Common myeloid progenitor, CD34-positive (primary cell): ENCODE measurements at regions of chr19 and their contacts with region 1.

Region 1: DNA sequence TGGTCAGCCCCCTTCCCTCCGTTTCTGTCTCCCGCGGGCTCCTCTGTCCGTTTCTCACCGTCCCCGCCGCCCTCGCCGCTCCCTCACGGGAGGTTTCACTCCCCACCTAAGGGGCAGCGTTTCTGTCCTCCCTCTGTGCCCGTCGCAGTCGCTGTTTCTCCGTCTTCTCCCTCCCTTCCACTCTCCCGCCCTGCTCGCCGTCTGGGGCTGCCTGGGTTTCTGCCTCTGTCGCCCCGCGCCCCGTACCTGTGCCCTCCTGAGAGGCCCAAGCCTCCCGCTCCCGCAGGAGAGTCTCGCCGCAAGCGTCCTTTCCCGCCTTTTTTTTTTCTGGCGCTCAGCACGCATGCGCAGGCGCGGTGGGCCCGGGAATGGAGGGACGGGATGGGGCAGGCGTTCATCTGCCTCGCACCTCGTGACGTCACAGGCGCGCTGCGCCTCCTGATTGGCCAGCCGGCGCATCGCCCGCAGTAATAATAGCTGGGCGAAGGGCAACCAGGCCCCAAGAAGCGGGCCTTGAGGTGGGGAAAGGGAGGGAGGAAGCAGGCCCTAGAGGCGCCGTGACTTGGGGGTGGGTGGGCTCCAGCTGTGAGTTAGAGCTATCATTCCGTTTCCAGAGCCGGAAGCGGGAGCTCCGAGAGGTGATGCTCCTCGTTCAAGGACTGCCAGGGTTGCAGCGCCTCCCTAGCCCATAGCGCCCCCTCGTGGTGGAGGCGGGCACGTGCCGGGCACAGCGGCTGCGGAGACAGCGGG is 15.4 kb downstream of the SSC5D start:
- DNase-seq: peak; percentile 92 to 94 (median 93)
- H3K4me3 ChIP-seq: peak overlapping the region in 6 of 7 experiments; percentile 37 to 76 (median 56)
- H3K27ac ChIP-seq: peak overlapping the region in 1 of 2 experiments; percentile 14
- H3K4me1 ChIP-seq: peaks cover 0 to 10% (median 7%) of the 10 kb centered on the region in 4 experiments
- H3K27me3 ChIP-seq: peaks cover 0 to 2% (median 0%) of the 10 kb centered on the region in 5 experiments

Region 2: GRCh38 chr19:55319785-55320184 is 183.9 kb before region 1 on chr19:
- CTCF ChIA-PET with region 1: no interaction called
- POLR2A ChIA-PET with region 1: no interaction called
- DNase-seq: no peak
- H3K4me3 ChIP-seq: peak overlapping the region in 2 of 7 experiments; percentile 24 to 64
- H3K27ac ChIP-seq: no peak overlapping the region
- H3K4me1 ChIP-seq: peaks cover 0 to 38% (median 32%) of the 10 kb centered on the region in 4 experiments
- H3K27me3 ChIP-seq: no peaks in the 10 kb centered on the region

Region 3: GRCh38 chr19:55407800-55408532 is 95.7 kb before region 1 on chr19:
- CTCF ChIA-PET with region 1: no interaction called
- POLR2A ChIA-PET with region 1: no interaction called
- DNase-seq: peak; percentile 100
- H3K4me3 ChIP-seq: peak overlapping the region in 6 of 7 experiments; percentile 68 to 87 (median 80)
- H3K27ac ChIP-seq: peak overlapping the region; percentile 88 to 94
- H3K4me1 ChIP-seq: peaks cover 5 to 24% (median 22%) of the 10 kb centered on the region in 4 experiments
- H3K27me3 ChIP-seq: no peaks in the 10 kb centered on the region

Region 4: DNA sequence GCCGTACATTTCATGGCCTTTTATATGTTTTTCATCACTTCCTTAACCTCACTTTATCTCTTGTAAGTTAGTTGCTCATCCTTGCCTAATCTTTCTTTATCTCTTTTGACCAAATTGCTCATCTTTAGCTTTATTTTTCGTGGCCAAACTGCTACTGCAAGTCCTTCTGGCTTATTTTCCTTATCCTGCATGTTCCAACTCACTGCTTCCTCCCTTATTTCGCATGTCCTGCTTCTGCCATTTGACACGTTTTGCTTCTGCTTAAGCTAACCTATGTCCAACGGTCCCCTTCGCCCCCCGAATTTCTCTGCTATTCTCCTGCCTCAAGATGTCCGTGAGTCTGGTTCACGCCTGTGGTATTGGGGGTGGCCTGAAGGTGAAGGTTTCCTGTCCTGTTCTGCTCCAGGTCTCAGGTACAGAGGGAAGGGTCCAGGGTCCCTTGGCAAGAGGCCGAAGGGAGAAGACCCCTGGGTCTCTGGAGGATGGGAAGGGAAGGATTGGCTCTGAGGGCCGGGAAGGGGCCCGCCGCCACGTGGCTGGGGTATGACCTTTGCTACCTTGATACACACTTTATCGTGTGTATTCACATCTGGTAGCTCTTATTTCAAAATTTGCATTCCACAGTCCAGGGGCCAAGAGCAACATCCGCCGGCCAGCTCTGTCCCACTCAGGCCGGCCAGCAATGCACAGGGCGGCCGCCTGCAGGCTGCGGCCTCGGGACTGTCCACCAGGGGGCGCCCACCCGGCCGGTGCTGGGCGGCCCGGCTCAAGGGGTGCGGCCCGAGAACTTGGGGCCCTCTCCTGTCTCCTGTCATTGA is 36.2 kb before region 1 on chr19:
- CTCF ChIA-PET with region 1: interaction called, 37 read pairs
- POLR2A ChIA-PET with region 1: no interaction called
- DNase-seq: peak in 2 of 3 donors; percentile 49
- H3K4me3 ChIP-seq: no peak overlapping the region
- H3K27ac ChIP-seq: peak overlapping the region in 1 of 2 experiments; percentile 38
- H3K4me1 ChIP-seq: peaks cover 0 to 2% (median 1%) of the 10 kb centered on the region in 4 experiments
- H3K27me3 ChIP-seq: no peaks in the 10 kb centered on the region

Region 5: DNA sequence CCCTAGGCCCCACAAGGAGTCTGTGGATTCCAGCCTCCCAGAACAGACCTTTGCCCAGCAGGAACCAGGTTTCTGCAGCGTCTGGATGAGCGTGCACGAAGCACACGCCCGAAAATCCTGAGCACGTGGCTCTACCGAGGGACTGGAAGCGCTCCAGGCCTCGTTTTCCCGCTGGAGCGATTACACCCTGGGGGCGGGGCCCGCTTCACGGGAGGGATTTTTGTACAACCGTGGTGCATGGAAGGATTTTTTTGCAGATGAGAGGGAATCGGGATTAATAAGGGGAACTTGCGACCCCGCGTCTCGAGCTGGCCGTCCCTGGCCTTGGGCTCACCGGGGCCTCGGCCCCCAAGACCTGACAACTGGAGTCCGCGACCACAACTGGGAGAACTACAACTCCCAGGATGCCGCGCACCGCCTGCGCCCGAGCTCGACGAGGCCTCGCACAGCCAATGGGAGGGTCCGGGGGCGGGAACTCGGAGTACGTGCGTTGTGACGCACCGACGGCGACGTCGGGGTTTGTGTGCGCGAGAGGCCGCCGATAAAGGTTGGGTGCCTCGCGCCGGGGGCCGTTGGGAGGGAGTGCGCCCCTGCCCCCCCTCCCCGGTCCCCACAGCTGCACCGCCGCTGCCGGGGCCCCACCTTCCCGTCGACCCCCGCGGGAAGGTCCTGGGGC is 27.4 kb before region 1 on chr19 and contains the start of gene ZNF628:
- CTCF ChIA-PET with region 1: interaction called, 11 read pairs
- POLR2A ChIA-PET with region 1: interaction called, 3 read pairs
- DNase-seq: peak; percentile 98 to 99 (median 99)
- H3K4me3 ChIP-seq: peak within 1 kb of the TSS; percentile 50 to 89 (median 81)
- H3K27ac ChIP-seq: peak within 1 kb of the TSS in 1 of 2 experiments; percentile 84
- H3K4me1 ChIP-seq: peaks cover 2 to 19% (median 11%) of the 10 kb centered on the region in 4 experiments
- H3K27me3 ChIP-seq: no peaks in the 10 kb centered on the region

Region 6: GRCh38 chr19:55516878-55517620 is 13.4 kb after region 1 on chr19:
- CTCF ChIA-PET with region 1: interaction called, 21 read pairs
- POLR2A ChIA-PET with region 1: no interaction called
- DNase-seq: peak; percentile 90 to 93 (median 90)
- H3K4me3 ChIP-seq: peak overlapping the region in 6 of 7 experiments; percentile 27 to 79 (median 64)
- H3K27ac ChIP-seq: peak overlapping the region; percentile 6 to 79
- H3K4me1 ChIP-seq: peaks cover 0 to 7% (median 4%) of the 10 kb centered on the region in 4 experiments
- H3K27me3 ChIP-seq: no peaks in the 10 kb centered on the region